ENCODE measurements at regions of chr7 and their contacts with region 1.

Region 1: GRCh38 chr7:17301471-17302456 is 3.3 kb downstream of the AHR start:
- DNase-seq: peak; percentile 54
- H3K4me3 Mint-ChIP-seq: peak overlapping the region; percentile 51
- H3K27ac Mint-ChIP-seq: no peak overlapping the region
- H3K4me1 Mint-ChIP-seq: peaks cover 58% of the 10 kb centered on the region
- H3K27me3 Mint-ChIP-seq: no peaks in the 10 kb centered on the region

Region 2: GRCh38 chr7:17009007-17009719 is 292.6 kb before region 1 on chr7:
- CTCF ChIA-PET with region 1: interaction called, 12 read pairs
- DNase-seq: no peak
- H3K4me3 Mint-ChIP-seq: no peak overlapping the region
- H3K27ac Mint-ChIP-seq: no peak overlapping the region
- H3K4me1 Mint-ChIP-seq: peaks cover 31% of the 10 kb centered on the region
- H3K27me3 Mint-ChIP-seq: no peaks in the 10 kb centered on the region